Transverse colon (tissue), 4 donors: ENCODE measurements at regions of chr4 and their contacts with region 1.

Region 1: GRCh38 chr4:83034630-83035494 is at the start of gene COPS4:
- DNase-seq: peak; percentile 97
- H3K4me3 ChIP-seq: peak within 1 kb of the TSS; percentile 55 to 92 (median 67)
- H3K27ac ChIP-seq: peak within 1 kb of the TSS; percentile 84 to 96 (median 90)
- H3K4me1 ChIP-seq: peaks cover 5 to 24% (median 17%) of the 10 kb centered on the region in 4 donors
- H3K27me3 ChIP-seq: no peaks in the 10 kb centered on the region
- CTCF ChIP-seq: peak; percentile 31 to 70 (median 43)
- EP300 ChIP-seq: peak; percentile 39
- POLR2A ChIP-seq: peak; percentile 77
- total RNA-seq, gene COPS4: 6.7 to 81.8 (median 32.3) TPM

Region 2: DNA sequence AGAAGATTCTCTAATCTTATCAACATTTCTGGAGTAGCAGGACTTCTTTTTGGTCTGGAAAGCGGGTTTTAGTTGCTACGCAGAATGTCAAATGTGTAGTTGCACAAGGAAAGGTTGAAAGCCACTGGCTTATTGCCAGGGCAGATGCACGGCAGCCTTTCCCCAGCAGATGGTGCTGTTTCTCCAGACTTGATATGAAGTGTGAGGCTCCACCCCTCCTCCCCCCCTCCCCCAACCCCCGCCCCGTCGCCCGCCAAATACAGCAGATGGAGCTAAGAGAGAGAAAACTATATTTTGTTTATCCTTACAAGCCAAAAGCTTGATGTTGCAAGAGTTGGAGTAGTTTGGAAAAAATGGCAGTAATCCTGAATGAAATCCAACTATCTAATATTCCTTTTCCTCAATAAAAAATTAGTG is 572.4 kb before region 1 on chr4:
- in situ Hi-C with region 1: loop called in 1 of 4 experiments (anchors 25 kb)
- intact Hi-C with region 1: no loop called
- DNase-seq: peak; percentile 90
- H3K4me3 ChIP-seq: no peak overlapping the region
- H3K27ac ChIP-seq: peak overlapping the region in 1 of 4 donors; percentile 27
- H3K4me1 ChIP-seq: peaks cover 0 to 7% (median 3%) of the 10 kb centered on the region in 4 donors
- H3K27me3 ChIP-seq: no peaks in the 10 kb centered on the region
- CTCF ChIP-seq: peak; percentile 54 to 92 (median 84)
- EP300 ChIP-seq: no peak
- POLR2A ChIP-seq: no peak

Region 3: GRCh38 chr4:82890901-82891706 is 143.8 kb before region 1 on chr4 and contains the start of gene SEC31A:
- in situ Hi-C with region 1: loop called in 1 of 4 experiments (anchors 10 kb)
- intact Hi-C with region 1: loop called (anchors 10 kb)
- DNase-seq: peak; percentile 98
- H3K4me3 ChIP-seq: peak within 1 kb of the TSS; percentile 71 to 76 (median 75)
- H3K27ac ChIP-seq: peak within 1 kb of the TSS; percentile 96 to 98 (median 97)
- H3K4me1 ChIP-seq: peaks cover 10 to 37% (median 32%) of the 10 kb centered on the region in 4 donors
- H3K27me3 ChIP-seq: no peaks in the 10 kb centered on the region
- CTCF ChIP-seq: no peak
- EP300 ChIP-seq: peak; percentile 49
- POLR2A ChIP-seq: peak; percentile 98
- total RNA-seq, gene SEC31A: 144 to 214 (median 163) TPM

Region 4: GRCh38 chr4:83012687-83013419 is 22.0 kb before region 1 on chr4:
- in situ Hi-C with region 1: no loop called
- intact Hi-C with region 1: loop called (anchors 1 kb)
- DNase-seq: peak; percentile 99
- H3K4me3 ChIP-seq: peak overlapping the region; percentile 87 to 98 (median 92)
- H3K27ac ChIP-seq: peak overlapping the region; percentile 95 to 98 (median 97)
- H3K4me1 ChIP-seq: peaks cover 18 to 29% (median 29%) of the 10 kb centered on the region in 4 donors
- H3K27me3 ChIP-seq: no peaks in the 10 kb centered on the region
- CTCF ChIP-seq: peak; percentile 45 to 89 (median 66)
- EP300 ChIP-seq: peak; percentile 53
- POLR2A ChIP-seq: peak; percentile 66

Region 5: GRCh38 chr4:83440899-83441298 is 406.0 kb after region 1 on chr4:
- in situ Hi-C with region 1: loop called in 1 of 4 experiments (anchors 25 kb)
- intact Hi-C with region 1: no loop called
- DNase-seq: no peak
- H3K4me3 ChIP-seq: no peak overlapping the region
- H3K27ac ChIP-seq: no peak overlapping the region
- H3K4me1 ChIP-seq: no peaks in the 10 kb centered on the region
- H3K27me3 ChIP-seq: no peaks in the 10 kb centered on the region
- CTCF ChIP-seq: no peak
- EP300 ChIP-seq: no peak
- POLR2A ChIP-seq: no peak

Region 6: DNA sequence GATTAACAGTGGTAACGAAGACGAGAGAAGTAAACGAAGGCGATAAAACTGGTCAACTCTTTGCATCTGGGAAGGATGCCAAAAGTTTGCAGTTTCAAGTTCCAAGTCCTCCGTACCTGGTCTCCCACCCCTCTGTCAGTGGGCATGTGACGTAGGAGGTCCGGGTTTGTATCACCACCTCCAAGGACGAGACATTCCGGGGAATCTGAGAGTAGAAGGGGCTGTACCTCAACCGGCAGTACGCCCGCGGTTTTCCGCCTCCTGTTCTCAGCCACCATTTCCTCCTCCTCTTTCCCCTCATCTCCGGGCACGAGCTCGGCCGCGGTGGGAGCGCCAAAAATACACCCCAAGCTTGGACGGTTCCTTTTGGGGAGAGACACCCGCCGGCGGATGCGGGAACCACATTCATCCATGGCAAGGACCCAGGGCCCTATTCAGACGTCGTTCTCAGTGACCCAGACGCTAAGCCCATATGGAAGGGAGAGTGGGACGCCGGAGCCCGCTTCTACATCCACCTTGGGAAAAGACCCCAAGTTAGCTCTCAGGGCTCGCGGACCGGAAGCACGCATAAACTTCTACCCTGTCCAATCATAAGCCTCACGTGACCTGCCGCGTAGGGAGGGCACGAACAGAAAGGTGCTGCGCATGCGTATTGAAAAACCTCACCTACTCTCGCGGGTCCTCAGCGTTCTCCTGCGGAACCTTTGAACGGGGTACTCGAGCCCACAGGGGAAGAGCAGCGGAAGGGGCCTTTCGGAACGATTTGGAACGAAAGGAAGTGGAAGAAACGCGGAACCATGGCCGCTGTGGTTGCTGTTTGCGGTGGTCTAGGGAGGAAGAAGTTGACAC is 420.6 kb after region 1 on chr4 and contains the starts of genes HELQ and MRPS18C:
- in situ Hi-C with region 1: loop called in 1 of 4 experiments (anchors 25 kb)
- intact Hi-C with region 1: no loop called
- DNase-seq: peak; percentile 97
- H3K4me3 ChIP-seq: peak within 1 kb of the TSS; percentile 66 to 88 (median 74)
- H3K27ac ChIP-seq: peak within 1 kb of the TSS; percentile 95 to 98 (median 96)
- H3K4me1 ChIP-seq: peaks cover 0 to 29% (median 22%) of the 10 kb centered on the region in 4 donors
- H3K27me3 ChIP-seq: no peaks in the 10 kb centered on the region
- CTCF ChIP-seq: peak in 4 of 5 experiments; percentile 21 to 56 (median 36)
- EP300 ChIP-seq: no peak
- POLR2A ChIP-seq: peak; percentile 83
- total RNA-seq, gene HELQ: 2.6 to 19.1 (median 7.4) TPM
- total RNA-seq, gene MRPS18C: 10.7 to 32.2 (median 16.5) TPM